ENCODE measurements at regions of chr5 and their contacts with region 1.

Region 1: DNA sequence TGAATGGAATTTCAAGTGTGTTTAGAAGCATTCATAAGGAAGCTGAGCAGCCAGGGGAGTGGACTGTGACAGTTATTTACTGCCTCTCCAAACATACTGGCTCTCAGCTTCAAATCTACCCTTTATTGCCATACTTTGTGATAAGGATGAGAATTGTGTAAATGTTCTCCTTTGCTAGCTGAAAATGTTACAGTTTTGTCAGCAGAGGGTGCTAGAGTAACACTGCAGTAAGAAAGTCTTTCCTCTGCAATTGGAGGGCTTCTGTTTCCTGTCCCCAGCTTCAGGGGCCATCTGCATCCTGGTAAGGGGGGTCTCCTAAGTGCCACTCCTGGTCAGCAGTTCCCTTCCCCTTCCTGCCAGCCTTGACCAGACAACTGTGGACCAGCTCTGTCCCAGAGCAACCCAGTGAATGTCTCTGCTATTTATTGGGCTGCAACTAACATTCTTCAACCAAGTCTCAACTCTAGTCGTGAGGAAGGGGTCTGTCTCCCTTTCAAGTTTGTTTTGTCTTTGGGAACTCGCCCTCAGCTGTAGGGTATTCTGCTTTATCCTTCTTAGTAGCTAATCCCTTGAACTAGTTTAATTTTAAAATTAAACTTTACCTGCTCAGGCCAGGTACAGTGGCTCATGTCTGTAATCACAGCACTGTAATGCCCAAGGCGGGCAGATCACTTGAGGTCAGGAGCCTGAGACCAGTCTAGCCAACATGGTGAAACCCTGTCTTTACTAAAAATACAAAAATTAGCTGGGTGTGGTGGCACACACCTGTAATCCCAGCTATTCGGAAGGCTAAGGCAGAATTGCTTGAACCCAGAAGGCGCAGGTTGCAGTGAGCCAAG is 45.3 kb downstream of the RAPGEF6 start:
- DNase-seq: no peak
- H3K4me3 ChIP-seq: no peak overlapping the region
- H3K27ac ChIP-seq: no peak overlapping the region
- H3K4me1 ChIP-seq: peaks cover 0 to 19% (median 9%) of the 10 kb centered on the region in 4 donors
- H3K27me3 ChIP-seq: no peaks in the 10 kb centered on the region
- CTCF ChIP-seq: peak; percentile 66 to 87 (median 82)
- EP300 ChIP-seq: no peak
- POLR2A ChIP-seq: no peak

Region 2: DNA sequence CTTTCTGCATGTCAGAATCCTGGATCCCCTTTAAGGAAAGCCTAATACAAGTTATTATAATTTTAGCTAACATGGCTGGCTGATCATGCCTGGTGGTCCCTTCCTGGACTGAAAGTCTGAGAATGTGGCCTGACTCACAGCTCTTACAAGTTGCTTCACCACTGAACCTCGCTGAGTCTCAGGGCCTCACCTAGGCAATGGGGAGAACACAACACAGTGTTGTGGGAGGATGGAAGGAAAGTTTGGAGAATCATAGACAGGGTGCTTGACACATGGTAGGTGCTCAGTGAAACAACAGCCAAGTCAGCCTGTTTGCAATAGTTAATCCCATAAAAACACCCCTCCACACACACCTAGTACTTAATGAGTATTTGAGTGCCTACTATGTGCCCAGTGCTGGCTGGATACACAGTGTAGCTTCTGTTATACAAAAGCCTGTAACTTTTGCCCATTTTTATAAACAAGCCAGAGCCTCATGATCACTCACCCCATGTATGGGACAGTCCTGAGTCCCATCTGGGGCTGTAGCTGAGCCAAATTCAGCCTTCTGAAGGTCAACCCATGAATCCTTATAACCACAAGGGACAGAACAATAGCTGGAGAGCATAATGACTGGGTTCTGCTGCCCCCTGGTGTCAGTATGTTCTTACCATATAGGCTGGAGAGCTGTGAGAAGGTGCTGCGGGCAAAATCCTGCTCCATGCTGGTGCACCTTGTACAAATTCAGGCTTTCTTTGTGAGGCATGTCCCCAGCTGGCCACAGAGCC is 417.9 kb after region 1 on chr5:
- intact Hi-C with region 1: loop called (anchors 1 kb)
- DNase-seq: peak; percentile 81
- H3K4me3 ChIP-seq: no peak overlapping the region
- H3K27ac ChIP-seq: no peak overlapping the region
- H3K4me1 ChIP-seq: peaks cover 0 to 17% (median 15%) of the 10 kb centered on the region in 4 donors
- H3K27me3 ChIP-seq: peaks cover 3 to 17% (median 12%) of the 10 kb centered on the region in 3 donors
- CTCF ChIP-seq: peak; percentile 55 to 84 (median 73)
- EP300 ChIP-seq: no peak
- POLR2A ChIP-seq: no peak

Region 3: GRCh38 chr5:132063090-132063911 is 473.6 kb after region 1 on chr5:
- intact Hi-C with region 1: loop called (anchors 2 kb)
- DNase-seq: peak; percentile 73
- H3K4me3 ChIP-seq: no peak overlapping the region
- H3K27ac ChIP-seq: no peak overlapping the region
- H3K4me1 ChIP-seq: no peaks in the 10 kb centered on the region
- H3K27me3 ChIP-seq: no peaks in the 10 kb centered on the region
- CTCF ChIP-seq: peak; percentile 39 to 97 (median 75)
- EP300 ChIP-seq: no peak
- POLR2A ChIP-seq: no peak